ENCODE measurements at regions of chr2 and their contacts with region 1.

Region 1: GRCh38 chr2:203934041-203934492 is 2.5 kb upstream of the ICOS start:
- DNase-seq: peak; percentile 76
- H3K4me3 Mint-ChIP-seq: peak overlapping the region; percentile 74
- H3K27ac Mint-ChIP-seq: peak overlapping the region; percentile 94
- H3K4me1 Mint-ChIP-seq: peaks cover 59% of the 10 kb centered on the region
- H3K27me3 Mint-ChIP-seq: no peaks in the 10 kb centered on the region

Region 2: GRCh38 chr2:203858176-203858575 is 75.9 kb before region 1 on chr2:
- CTCF ChIA-PET with region 1: no interaction called
- POLR2A ChIA-PET with region 1: interaction called, 21 read pairs
- intact Hi-C with region 1: no loop called
- DNase-seq: peak; percentile 66
- H3K4me3 Mint-ChIP-seq: peak overlapping the region; percentile 25
- H3K27ac Mint-ChIP-seq: peak overlapping the region; percentile 81
- H3K4me1 Mint-ChIP-seq: peaks cover 84% of the 10 kb centered on the region
- H3K27me3 Mint-ChIP-seq: no peaks in the 10 kb centered on the region

Region 3: GRCh38 chr2:203893401-203893800 is 40.7 kb before region 1 on chr2:
- CTCF ChIA-PET with region 1: interaction called, 3 read pairs
- POLR2A ChIA-PET with region 1: interaction called, 17 read pairs
- intact Hi-C with region 1: no loop called
- DNase-seq: no peak
- H3K4me3 Mint-ChIP-seq: peak overlapping the region; percentile 14
- H3K27ac Mint-ChIP-seq: peak overlapping the region; percentile 84
- H3K4me1 Mint-ChIP-seq: peaks cover 77% of the 10 kb centered on the region
- H3K27me3 Mint-ChIP-seq: no peaks in the 10 kb centered on the region

Region 4: GRCh38 chr2:203949228-203949627 is 15.2 kb after region 1 on chr2:
- CTCF ChIA-PET with region 1: interaction called, 4 read pairs
- POLR2A ChIA-PET with region 1: interaction called, 55 read pairs
- intact Hi-C with region 1: loop called (anchors 2 kb)
- DNase-seq: no peak
- H3K4me3 Mint-ChIP-seq: peak overlapping the region; percentile 65
- H3K27ac Mint-ChIP-seq: peak overlapping the region; percentile 89
- H3K4me1 Mint-ChIP-seq: peaks cover 87% of the 10 kb centered on the region
- H3K27me3 Mint-ChIP-seq: no peaks in the 10 kb centered on the region

Region 5: GRCh38 chr2:204010628-204011560 is 76.8 kb after region 1 on chr2:
- CTCF ChIA-PET with region 1: no interaction called
- POLR2A ChIA-PET with region 1: interaction called, 11 read pairs
- intact Hi-C with region 1: loop called (anchors 1 kb)
- DNase-seq: peak; percentile 49
- H3K4me3 Mint-ChIP-seq: peak overlapping the region; percentile 56
- H3K27ac Mint-ChIP-seq: peak overlapping the region; percentile 78
- H3K4me1 Mint-ChIP-seq: peaks cover 87% of the 10 kb centered on the region
- H3K27me3 Mint-ChIP-seq: no peaks in the 10 kb centered on the region

Measured in activated CD4-positive, alpha-beta memory T cell treated with anti-CD3 and anti-CD28 coated beads for 36 hours (primary cell).